ENCODE measurements at regions of chr19 and their contacts with region 1.

Region 1: GRCh38 chr19:38492181-38492813 is 58.8 kb downstream of the RYR1 start:
- DNase-seq: no peak

Region 2: GRCh38 chr19:39506944-39507714 is 1014.8 kb after region 1 on chr19:
- intact Hi-C with region 1: loop called in 1 of 2 experiments (anchors 5 kb)
- DNase-seq: no peak

Measured in posterior vena cava (tissue), 2 donors.